Activated CD4-positive, alpha-beta memory T cell treated with anti-CD3 and anti-CD28 coated beads, Interleukin-2, amount 10 ng/mL, durations not matched to agents 7 days and 5 days (primary cell): ENCODE measurements at regions of chr1 and their contacts with region 1.

Region 1: GRCh38 chr1:24391882-24392603 is 21.5 kb downstream of the STPG1 start:
- DNase-seq: peak; percentile 74
- H3K4me3 Mint-ChIP-seq: peak overlapping the region; percentile 77
- H3K27ac Mint-ChIP-seq: peak overlapping the region; percentile 90
- H3K4me1 Mint-ChIP-seq: peaks cover 25% of the 10 kb centered on the region
- H3K27me3 Mint-ChIP-seq: no peaks in the 10 kb centered on the region

Region 2: DNA sequence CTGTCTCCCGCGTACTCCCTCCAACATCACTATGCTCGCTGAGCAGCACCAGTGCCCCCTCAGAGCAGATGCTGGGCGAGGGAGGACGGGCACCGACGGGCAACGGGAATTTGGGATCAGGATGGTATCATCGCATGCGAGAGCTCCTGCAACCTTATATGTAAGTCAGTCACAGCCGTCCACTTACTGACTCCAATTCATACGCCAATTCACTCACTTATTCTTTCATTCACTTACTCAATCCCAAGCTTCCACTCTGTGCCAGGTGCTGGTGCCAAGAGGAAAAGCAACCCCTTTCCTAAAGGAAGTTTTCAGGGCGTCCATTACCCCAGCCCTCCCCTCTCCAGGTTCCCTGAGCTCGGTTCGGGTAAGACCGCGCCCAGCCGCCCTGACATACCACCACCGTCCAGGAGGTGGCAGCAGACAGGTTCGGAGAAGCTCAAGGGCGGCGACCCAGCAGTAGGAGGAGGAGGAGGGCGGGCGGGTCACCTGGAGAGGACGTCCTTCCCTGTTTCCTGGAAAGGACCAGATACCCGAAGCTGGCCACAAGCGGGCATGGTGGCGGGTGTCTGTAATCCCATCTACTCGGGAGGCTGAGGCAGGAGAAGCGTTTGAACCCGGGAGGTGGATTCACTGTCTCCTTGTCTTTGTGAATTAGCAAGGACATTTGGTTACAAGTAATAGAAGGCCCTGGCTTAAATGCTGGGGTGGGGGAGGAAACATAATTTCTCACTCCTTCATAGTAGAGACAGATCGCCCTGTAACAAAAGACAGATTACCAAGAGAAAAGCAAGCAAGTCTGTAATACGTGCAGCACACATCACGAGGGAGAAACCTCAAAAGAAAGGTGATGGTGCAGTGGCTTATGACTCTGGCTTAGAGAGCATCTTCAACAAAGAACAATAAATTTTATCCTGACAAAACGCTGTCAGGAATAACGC is 241.5 kb before region 1 on chr1:
- CTCF ChIA-PET with region 1: interaction called, 94 read pairs
- POLR2A ChIA-PET with region 1: interaction called, 19 read pairs
- DNase-seq: peak; percentile 90
- H3K4me3 Mint-ChIP-seq: peak overlapping the region; percentile 48
- H3K27ac Mint-ChIP-seq: no peak overlapping the region
- H3K4me1 Mint-ChIP-seq: peaks cover 25% of the 10 kb centered on the region
- H3K27me3 Mint-ChIP-seq: peaks cover 33% of the 10 kb centered on the region

Region 3: DNA sequence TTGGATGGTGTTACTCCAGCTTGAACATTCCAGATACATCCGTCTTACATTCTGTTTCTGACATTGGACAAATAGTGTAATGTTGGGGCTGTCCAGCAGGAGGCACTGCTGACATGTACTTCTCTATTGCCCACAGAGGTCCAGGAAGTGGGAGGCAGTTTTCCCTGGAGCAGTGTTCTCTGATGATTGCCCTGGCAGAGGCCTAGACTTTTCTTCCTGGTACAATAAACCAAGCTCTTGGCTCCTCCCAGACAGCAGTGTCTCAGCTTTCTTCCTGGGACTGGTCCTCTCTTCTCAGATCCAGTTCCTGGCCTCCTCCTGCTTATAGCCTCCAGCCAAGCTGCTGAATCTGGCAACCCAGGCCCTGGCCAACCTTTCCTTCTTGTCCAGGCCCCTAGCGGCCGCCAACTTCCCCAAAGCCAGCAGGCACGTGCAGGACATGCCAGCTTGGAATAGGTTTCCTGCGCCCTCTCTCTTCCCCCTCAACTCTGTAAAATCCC is 190.1 kb before region 1 on chr1:
- CTCF ChIA-PET with region 1: interaction called, 441 read pairs
- POLR2A ChIA-PET with region 1: interaction called, 32 read pairs
- DNase-seq: peak; percentile 65
- H3K4me3 Mint-ChIP-seq: no peak overlapping the region
- H3K27ac Mint-ChIP-seq: no peak overlapping the region
- H3K4me1 Mint-ChIP-seq: peaks cover 21% of the 10 kb centered on the region
- H3K27me3 Mint-ChIP-seq: peaks cover 6% of the 10 kb centered on the region

Region 4: DNA sequence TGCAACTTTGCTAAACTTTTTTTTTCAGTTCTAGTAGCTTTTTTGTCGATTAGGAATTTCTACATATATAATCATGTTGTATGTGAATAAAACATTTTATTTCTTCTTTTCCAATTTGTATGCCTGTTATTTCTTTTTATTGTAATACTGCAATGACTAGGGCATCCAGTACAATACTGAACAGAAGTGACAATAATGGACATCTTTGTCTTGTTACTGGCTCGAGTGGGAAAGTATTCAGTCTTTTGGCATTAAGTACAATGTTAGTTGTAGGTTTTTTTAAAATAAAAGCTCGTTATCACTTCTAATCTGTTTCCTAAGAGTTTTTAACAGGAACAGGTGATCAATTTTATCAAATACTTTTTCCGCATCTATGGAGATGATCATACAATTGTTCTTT is 11.8 kb after region 1 on chr1:
- CTCF ChIA-PET with region 1: interaction called, 24 read pairs
- POLR2A ChIA-PET with region 1: no interaction called
- DNase-seq: no peak
- H3K4me3 Mint-ChIP-seq: no peak overlapping the region
- H3K27ac Mint-ChIP-seq: no peak overlapping the region
- H3K4me1 Mint-ChIP-seq: no peaks in the 10 kb centered on the region
- H3K27me3 Mint-ChIP-seq: no peaks in the 10 kb centered on the region

Region 5: GRCh38 chr1:24438423-24438901 is 46.4 kb after region 1 on chr1:
- CTCF ChIA-PET with region 1: no interaction called
- POLR2A ChIA-PET with region 1: no interaction called
- DNase-seq: no peak
- H3K4me3 Mint-ChIP-seq: no peak overlapping the region
- H3K27ac Mint-ChIP-seq: no peak overlapping the region
- H3K4me1 Mint-ChIP-seq: peaks cover 2% of the 10 kb centered on the region
- H3K27me3 Mint-ChIP-seq: no peaks in the 10 kb centered on the region

Region 6: DNA sequence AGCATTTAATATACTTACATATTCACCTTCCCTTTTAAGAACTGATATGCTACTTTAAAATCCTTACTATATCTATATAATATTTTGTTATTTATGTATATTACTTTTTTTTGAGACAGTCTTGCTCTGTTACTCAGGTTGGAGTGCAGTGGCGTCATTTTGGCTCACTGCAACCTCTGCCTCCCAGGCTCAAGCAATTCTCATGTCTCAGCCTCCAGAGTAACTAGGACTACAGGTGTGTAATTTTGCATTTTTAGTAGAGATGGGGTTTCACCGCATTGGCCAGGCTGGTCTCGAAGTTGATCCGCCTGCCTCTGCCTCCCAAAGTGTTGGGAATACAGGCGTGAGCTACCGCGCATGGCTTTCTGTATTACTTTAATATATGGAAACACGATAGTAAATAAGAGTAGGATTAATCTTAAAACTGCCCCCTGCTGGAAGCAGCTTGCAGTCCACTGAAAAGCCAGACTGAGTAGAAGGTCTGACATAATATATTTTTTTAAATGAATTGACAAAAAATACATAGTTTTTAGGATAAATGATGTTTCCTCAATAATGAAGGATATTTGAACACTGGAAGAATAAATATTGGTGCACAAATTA is 135.0 kb after region 1 on chr1:
- CTCF ChIA-PET with region 1: interaction called, 16 read pairs
- POLR2A ChIA-PET with region 1: no interaction called
- DNase-seq: peak; percentile 57
- H3K4me3 Mint-ChIP-seq: no peak overlapping the region
- H3K27ac Mint-ChIP-seq: peak overlapping the region; percentile 14
- H3K4me1 Mint-ChIP-seq: peaks cover 25% of the 10 kb centered on the region
- H3K27me3 Mint-ChIP-seq: no peaks in the 10 kb centered on the region

Region 7: DNA sequence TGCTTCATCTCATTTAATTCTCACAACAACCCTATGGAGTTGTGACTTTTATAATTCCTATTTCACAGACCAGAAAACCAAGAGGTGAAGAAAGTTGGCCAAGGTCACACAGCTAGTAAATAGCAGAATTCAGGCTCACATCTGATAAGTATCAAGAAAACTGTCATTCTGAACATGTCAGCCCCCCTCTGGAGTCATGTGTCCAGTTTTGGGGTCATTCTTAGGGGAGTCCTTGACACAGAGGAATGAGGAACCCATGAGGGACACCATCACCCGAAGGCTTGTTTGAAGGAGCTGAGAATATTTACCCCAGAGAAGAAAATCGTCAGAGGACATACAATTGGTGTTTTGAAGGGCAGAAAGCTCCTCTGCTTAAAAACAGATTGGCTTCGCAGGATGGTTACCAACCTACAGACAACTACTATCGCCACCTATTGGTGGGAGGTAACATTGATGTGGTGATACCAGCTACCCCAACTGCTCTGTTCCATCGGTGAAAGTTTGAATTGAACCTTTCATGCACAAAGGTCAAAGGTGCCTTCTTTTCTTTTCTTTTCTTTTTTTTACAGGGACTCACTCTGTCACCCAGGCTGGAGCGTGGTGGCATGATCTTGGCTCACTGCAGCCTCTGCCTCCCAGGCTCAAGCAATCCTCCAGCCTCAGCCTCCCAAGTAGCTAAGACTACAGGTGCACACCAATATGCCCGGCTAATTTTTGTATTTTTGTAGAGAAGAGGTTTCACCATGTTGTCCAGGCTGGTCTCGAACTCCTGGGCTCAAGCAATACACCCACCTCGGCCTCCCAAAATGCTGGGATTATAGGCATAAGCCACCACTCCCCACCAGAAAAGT is 195.2 kb after region 1 on chr1:
- CTCF ChIA-PET with region 1: interaction called, 41 read pairs
- POLR2A ChIA-PET with region 1: no interaction called
- DNase-seq: peak; percentile 54
- H3K4me3 Mint-ChIP-seq: no peak overlapping the region
- H3K27ac Mint-ChIP-seq: no peak overlapping the region
- H3K4me1 Mint-ChIP-seq: peaks cover 8% of the 10 kb centered on the region
- H3K27me3 Mint-ChIP-seq: peaks cover 8% of the 10 kb centered on the region

Region 8: GRCh38 chr1:24805534-24806301 is 413.7 kb after region 1 on chr1:
- CTCF ChIA-PET with region 1: no interaction called
- POLR2A ChIA-PET with region 1: no interaction called
- DNase-seq: no peak
- H3K4me3 Mint-ChIP-seq: no peak overlapping the region
- H3K27ac Mint-ChIP-seq: no peak overlapping the region
- H3K4me1 Mint-ChIP-seq: peaks cover 2% of the 10 kb centered on the region
- H3K27me3 Mint-ChIP-seq: no peaks in the 10 kb centered on the region